CD8-positive, alpha-beta T cell (primary cell): ENCODE measurements at regions of chr1 and their contacts with region 1.

Region 1: GRCh38 chr1:84422909-84423308 is 24.6 kb downstream of the DNASE2B start:
- DNase-seq: no peak
- ATAC-seq: no peak
- H3K4me3 ChIP-seq: no peak overlapping the region
- H3K4me3 Mint-ChIP-seq: no peak overlapping the region
- H3K27ac ChIP-seq: no peak overlapping the region
- H3K27ac Mint-ChIP-seq: no peak overlapping the region
- H3K4me1 ChIP-seq: no peaks in the 10 kb centered on the region
- H3K4me1 Mint-ChIP-seq: no peaks in the 10 kb centered on the region
- H3K27me3 ChIP-seq: no peaks in the 10 kb centered on the region
- H3K27me3 Mint-ChIP-seq: peaks cover 5% of the 10 kb centered on the region
- CTCF ChIP-seq: no peak

Region 2: DNA sequence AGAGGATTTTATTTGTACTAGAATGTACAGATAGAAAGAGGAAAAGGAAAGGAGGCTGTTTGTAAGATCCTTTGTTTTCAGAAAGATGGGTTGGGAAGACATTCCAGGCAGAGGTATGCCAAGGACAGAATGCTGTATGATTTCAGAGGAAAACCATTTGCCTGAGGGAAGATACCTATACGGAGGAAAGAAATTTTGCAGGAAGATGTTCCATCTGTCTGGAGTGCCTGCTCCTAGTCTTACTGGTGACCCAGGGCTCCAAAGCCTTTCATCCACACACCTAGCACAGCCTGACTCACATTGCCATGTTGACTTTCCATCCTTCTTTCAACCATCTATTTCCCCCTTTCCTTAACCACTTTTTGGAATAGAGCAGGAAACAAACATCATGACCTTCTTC is 103.2 kb before region 1 on chr1:
- CTCF ChIA-PET with region 1: no interaction called
- POLR2A ChIA-PET with region 1: no interaction called
- intact Hi-C with region 1: loop called in 1 of 2 experiments (anchors 5 kb)
- DNase-seq: no peak
- ATAC-seq: no peak
- H3K4me3 ChIP-seq: no peak overlapping the region
- H3K4me3 Mint-ChIP-seq: no peak overlapping the region
- H3K27ac ChIP-seq: no peak overlapping the region
- H3K27ac Mint-ChIP-seq: no peak overlapping the region
- H3K4me1 ChIP-seq: no peaks in the 10 kb centered on the region
- H3K4me1 Mint-ChIP-seq: no peaks in the 10 kb centered on the region
- H3K27me3 ChIP-seq: peaks cover 0 to 3% of the 10 kb centered on the region in 2 experiments
- H3K27me3 Mint-ChIP-seq: no peaks in the 10 kb centered on the region
- CTCF ChIP-seq: no peak

Region 3: DNA sequence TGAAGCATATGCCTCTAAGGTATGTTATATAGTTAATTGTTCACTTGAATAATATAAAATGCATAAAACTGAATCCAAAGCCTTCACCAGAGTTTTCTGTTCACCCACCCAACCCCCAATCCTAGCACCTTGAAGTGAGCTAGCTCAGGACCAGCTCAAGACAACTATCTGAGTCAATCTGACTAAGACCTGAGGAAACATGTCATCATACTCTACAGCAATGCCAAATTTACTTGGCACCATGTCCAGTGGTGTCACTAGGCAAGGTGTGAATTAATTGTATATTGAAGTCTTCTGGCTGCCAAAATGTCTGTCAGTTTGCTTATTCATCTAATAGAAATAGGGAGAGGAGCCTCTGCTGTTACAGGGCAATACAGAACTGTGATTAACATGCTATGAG is 20.8 kb before region 1 on chr1:
- CTCF ChIA-PET with region 1: no interaction called
- POLR2A ChIA-PET with region 1: no interaction called
- intact Hi-C with region 1: no loop called
- DNase-seq: no peak
- ATAC-seq: no peak
- H3K4me3 ChIP-seq: no peak overlapping the region
- H3K4me3 Mint-ChIP-seq: no peak overlapping the region
- H3K27ac ChIP-seq: no peak overlapping the region
- H3K27ac Mint-ChIP-seq: no peak overlapping the region
- H3K4me1 ChIP-seq: no peaks in the 10 kb centered on the region
- H3K4me1 Mint-ChIP-seq: no peaks in the 10 kb centered on the region
- H3K27me3 ChIP-seq: no peaks in the 10 kb centered on the region
- H3K27me3 Mint-ChIP-seq: no peaks in the 10 kb centered on the region
- CTCF ChIP-seq: no peak